Colonic mucosa (tissue), 4 donors: ENCODE measurements at regions of chr9 and their contacts with region 1.

Region 1: GRCh38 chr9:27529316-27530278 is at the start of gene MOB3B:
- DNase-seq: peak; percentile 93
- H3K4me3 ChIP-seq: peak within 1 kb of the TSS; percentile 79
- H3K27ac ChIP-seq: peak within 1 kb of the TSS; percentile 96
- H3K4me1 ChIP-seq: no peaks in the 10 kb centered on the region
- H3K27me3 ChIP-seq: no peaks in the 10 kb centered on the region
- CTCF ChIP-seq: peak; percentile 94
- total RNA-seq, gene MOB3B: 35.8 to 39.6 TPM

Region 2: GRCh38 chr9:27333241-27334052 is 196.2 kb before region 1 on chr9:
- intact Hi-C with region 1: loop called (anchors 5 kb)
- DNase-seq: peak; percentile 66
- H3K4me3 ChIP-seq: no peak overlapping the region
- H3K27ac ChIP-seq: no peak overlapping the region
- H3K4me1 ChIP-seq: peaks cover 1% of the 10 kb centered on the region
- H3K27me3 ChIP-seq: no peaks in the 10 kb centered on the region
- CTCF ChIP-seq: peak; percentile 92

Region 3: GRCh38 chr9:27414220-27414761 is 115.3 kb before region 1 on chr9:
- intact Hi-C with region 1: loop called (anchors 10 kb)
- DNase-seq: peak; percentile 63
- H3K4me3 ChIP-seq: no peak overlapping the region
- H3K27ac ChIP-seq: peak overlapping the region; percentile 45
- H3K4me1 ChIP-seq: peaks cover 12% of the 10 kb centered on the region
- H3K27me3 ChIP-seq: no peaks in the 10 kb centered on the region
- CTCF ChIP-seq: no peak

Region 4: GRCh38 chr9:27468000-27468399 is 61.6 kb before region 1 on chr9:
- intact Hi-C with region 1: loop called (anchors 2 kb)
- DNase-seq: no peak
- H3K4me3 ChIP-seq: no peak overlapping the region
- H3K27ac ChIP-seq: no peak overlapping the region
- H3K4me1 ChIP-seq: no peaks in the 10 kb centered on the region
- H3K27me3 ChIP-seq: no peaks in the 10 kb centered on the region
- CTCF ChIP-seq: no peak

Region 5: DNA sequence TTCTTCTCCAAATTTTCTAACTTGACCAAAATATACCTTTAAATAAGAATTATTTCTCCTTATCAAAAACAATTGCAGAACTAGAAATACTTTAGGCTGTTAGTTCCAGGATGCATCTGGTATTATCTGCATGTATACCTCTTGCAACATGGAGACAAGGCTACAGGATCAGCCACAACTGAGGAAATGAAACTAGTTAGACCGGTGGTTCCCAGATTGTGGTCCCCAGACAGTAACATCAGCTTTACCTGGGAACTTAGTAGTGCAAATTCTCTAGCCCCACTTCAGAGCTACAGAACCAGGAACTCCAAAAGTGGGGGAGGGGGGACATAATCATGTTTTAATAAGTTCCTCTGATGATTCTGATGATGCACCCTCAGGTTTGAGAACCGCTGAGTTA is 105.3 kb after region 1 on chr9:
- intact Hi-C with region 1: no loop called
- DNase-seq: no peak
- H3K4me3 ChIP-seq: no peak overlapping the region
- H3K27ac ChIP-seq: no peak overlapping the region
- H3K4me1 ChIP-seq: no peaks in the 10 kb centered on the region
- H3K27me3 ChIP-seq: no peaks in the 10 kb centered on the region
- CTCF ChIP-seq: no peak

Region 6: GRCh38 chr9:28073270-28073669 is 543.7 kb after region 1 on chr9:
- intact Hi-C with region 1: no loop called
- DNase-seq: peak; percentile 20
- H3K4me3 ChIP-seq: no peak overlapping the region
- H3K27ac ChIP-seq: no peak overlapping the region
- H3K4me1 ChIP-seq: no peaks in the 10 kb centered on the region
- H3K27me3 ChIP-seq: no peaks in the 10 kb centered on the region
- CTCF ChIP-seq: peak; percentile 25